Activated CD4-positive, alpha-beta T cell treated with anti-CD3 and anti-CD28 coated beads for 36 hours (primary cell): ENCODE measurements at regions of chr20 and their contacts with region 1.

Region 1: GRCh38 chr20:34676642-34677373 is at the start of gene PIGU:
- DNase-seq: peak; percentile 98
- ATAC-seq: peak; percentile 97
- H3K4me3 Mint-ChIP-seq: peak within 1 kb of the TSS; percentile 97
- H3K27ac Mint-ChIP-seq: peak within 1 kb of the TSS; percentile 96
- H3K4me1 Mint-ChIP-seq: peaks cover 34% of the 10 kb centered on the region
- H3K27me3 Mint-ChIP-seq: no peaks in the 10 kb centered on the region
- total RNA-seq, gene PIGU: 21.1 to 28.2 TPM

Region 2: DNA sequence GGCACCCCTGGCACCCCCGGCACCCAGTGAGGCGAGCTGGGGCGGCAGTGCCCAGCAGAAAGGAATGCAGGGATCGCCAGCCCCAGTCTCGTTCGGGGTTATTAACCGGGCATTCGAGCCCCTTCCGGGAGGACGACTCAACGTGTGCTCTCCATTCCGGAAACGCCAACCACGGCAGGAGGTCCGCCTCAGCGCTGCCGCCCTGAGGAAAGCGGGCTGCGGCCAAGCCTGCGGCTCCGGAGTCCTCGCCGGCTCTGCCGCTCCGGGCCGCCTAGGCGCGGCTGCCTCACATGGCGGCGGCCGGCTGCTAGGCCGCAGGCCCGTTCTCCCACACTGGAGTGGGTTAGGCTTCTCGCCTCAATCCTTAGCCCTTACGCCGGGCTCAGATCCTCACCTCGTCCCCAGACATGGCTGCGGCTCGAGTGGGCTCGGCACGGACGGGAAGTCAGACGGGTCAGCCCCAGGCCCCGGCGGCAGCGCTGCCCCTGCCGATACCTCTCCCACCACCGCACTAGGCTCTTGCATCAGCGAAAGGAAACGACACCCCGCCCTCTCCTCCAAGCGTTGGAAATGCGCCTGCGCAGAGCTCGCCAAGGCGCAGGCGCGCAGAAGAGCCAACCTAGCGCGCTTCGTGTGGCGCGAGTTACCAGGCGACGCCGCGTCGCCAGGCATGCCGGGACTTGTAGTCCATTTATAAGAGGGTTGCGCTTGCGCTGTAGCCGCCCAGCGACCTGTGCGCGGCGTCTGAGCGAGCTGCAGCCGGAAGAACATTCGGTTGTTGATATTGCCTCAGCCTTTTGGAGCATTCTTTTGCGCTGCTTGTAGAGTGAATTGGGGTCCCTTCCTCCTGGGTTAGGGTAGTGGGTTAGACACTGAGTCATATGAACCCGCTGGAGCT is 564.9 kb before region 1 on chr20 and contains the start of gene EIF2S2:
- CTCF ChIA-PET with region 1: interaction called, 3 read pairs
- POLR2A ChIA-PET with region 1: no interaction called
- intact Hi-C with region 1: loop called in 1 of 2 experiments (anchors 1 kb)
- DNase-seq: peak; percentile 97
- ATAC-seq: peak; percentile 88
- H3K4me3 Mint-ChIP-seq: peak within 1 kb of the TSS; percentile 86
- H3K27ac Mint-ChIP-seq: peak within 1 kb of the TSS; percentile 97
- H3K4me1 Mint-ChIP-seq: peaks cover 38% of the 10 kb centered on the region
- H3K27me3 Mint-ChIP-seq: no peaks in the 10 kb centered on the region
- total RNA-seq, gene EIF2S2: 179 to 187 TPM

Region 3: DNA sequence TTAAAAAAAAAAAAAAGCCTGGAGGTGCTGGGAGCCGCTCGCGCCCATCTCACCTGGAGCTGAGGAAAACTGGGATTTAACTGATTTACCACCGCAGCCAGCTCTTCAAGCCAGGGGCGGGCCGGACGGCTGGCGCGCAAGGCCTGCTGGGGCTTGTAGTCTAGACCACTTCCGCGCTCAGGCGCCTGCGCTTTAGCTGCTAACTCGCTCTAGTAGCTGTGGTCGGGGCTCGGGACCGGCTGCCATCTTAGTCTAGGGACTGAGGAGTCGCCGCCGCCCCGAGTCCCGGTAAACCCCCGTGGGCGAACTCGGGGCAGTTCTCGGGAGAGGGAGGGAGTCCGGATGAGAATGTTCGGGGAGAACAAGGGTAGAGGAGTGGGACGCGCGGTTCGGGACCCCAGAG is 313.7 kb before region 1 on chr20 and contains the start of gene ITCH:
- CTCF ChIA-PET with region 1: no interaction called
- POLR2A ChIA-PET with region 1: no interaction called
- intact Hi-C with region 1: loop called (anchors 1 kb)
- DNase-seq: peak; percentile 97
- ATAC-seq: peak; percentile 99
- H3K4me3 Mint-ChIP-seq: peak within 1 kb of the TSS; percentile 91
- H3K27ac Mint-ChIP-seq: peak within 1 kb of the TSS; percentile 98
- H3K4me1 Mint-ChIP-seq: peaks cover 38% of the 10 kb centered on the region
- H3K27me3 Mint-ChIP-seq: no peaks in the 10 kb centered on the region
- total RNA-seq, gene ITCH: 41.4 to 43.5 TPM

Region 4: GRCh38 chr20:34558320-34559218 is 118.2 kb before region 1 on chr20 and contains the start of gene MAP1LC3A:
- CTCF ChIA-PET with region 1: interaction called, 3 read pairs
- POLR2A ChIA-PET with region 1: interaction called, 8 read pairs
- intact Hi-C with region 1: loop called in 1 of 2 experiments (anchors 1 kb)
- DNase-seq: peak; percentile 96
- ATAC-seq: peak; percentile 87
- H3K4me3 Mint-ChIP-seq: peak within 1 kb of the TSS; percentile 79
- H3K27ac Mint-ChIP-seq: peak within 1 kb of the TSS; percentile 88
- H3K4me1 Mint-ChIP-seq: peaks cover 14% of the 10 kb centered on the region
- H3K27me3 Mint-ChIP-seq: no peaks in the 10 kb centered on the region
- total RNA-seq, gene MAP1LC3A: 2.5 to 2.7 TPM

Region 5: GRCh38 chr20:34579979-34580940 is 96.5 kb before region 1 on chr20:
- CTCF ChIA-PET with region 1: interaction called, 3 read pairs
- POLR2A ChIA-PET with region 1: no interaction called
- intact Hi-C with region 1: loop called in 1 of 2 experiments (anchors 1 kb)
- DNase-seq: peak; percentile 29
- ATAC-seq: peak; percentile 20
- H3K4me3 Mint-ChIP-seq: no peak overlapping the region
- H3K27ac Mint-ChIP-seq: peak overlapping the region; percentile 91
- H3K4me1 Mint-ChIP-seq: peaks cover 30% of the 10 kb centered on the region
- H3K27me3 Mint-ChIP-seq: no peaks in the 10 kb centered on the region

Region 6: GRCh38 chr20:34825530-34826362 is 148.9 kb after region 1 on chr20 and contains the start of gene NCOA6:
- CTCF ChIA-PET with region 1: no interaction called
- POLR2A ChIA-PET with region 1: no interaction called
- intact Hi-C with region 1: loop called in 1 of 2 experiments (anchors 1 kb)
- DNase-seq: peak; percentile 95
- ATAC-seq: peak; percentile 67
- H3K4me3 Mint-ChIP-seq: peak within 1 kb of the TSS; percentile 86
- H3K27ac Mint-ChIP-seq: peak within 1 kb of the TSS; percentile 95
- H3K4me1 Mint-ChIP-seq: peaks cover 30% of the 10 kb centered on the region
- H3K27me3 Mint-ChIP-seq: no peaks in the 10 kb centered on the region
- total RNA-seq, gene NCOA6: 20.3 to 31.1 TPM